GM18951 (cell line): ENCODE measurements at regions of chr11 and their contacts with region 1.

Region 1: GRCh38 chr11:14258221-14258935 is 100.6 kb downstream of the RRAS2 start:
- POLR2A ChIP-seq: no peak

Region 2: GRCh38 chr11:13772223-13773046 is 485.9 kb before region 1 on chr11:
- in situ Hi-C with region 1: loop called (anchors 10 kb)
- POLR2A ChIP-seq: no peak

Region 3: GRCh38 chr11:14308114-14308896 is 49.9 kb after region 1 on chr11:
- in situ Hi-C with region 1: no loop called
- POLR2A ChIP-seq: no peak